Activated CD4-positive, alpha-beta memory T cell treated with anti-CD3 and anti-CD28 coated beads, Interleukin-2, amount 10 ng/mL, durations not matched to agents 7 days and 5 days (primary cell): ENCODE measurements at regions of chr15 and their contacts with region 1.

Region 1: DNA sequence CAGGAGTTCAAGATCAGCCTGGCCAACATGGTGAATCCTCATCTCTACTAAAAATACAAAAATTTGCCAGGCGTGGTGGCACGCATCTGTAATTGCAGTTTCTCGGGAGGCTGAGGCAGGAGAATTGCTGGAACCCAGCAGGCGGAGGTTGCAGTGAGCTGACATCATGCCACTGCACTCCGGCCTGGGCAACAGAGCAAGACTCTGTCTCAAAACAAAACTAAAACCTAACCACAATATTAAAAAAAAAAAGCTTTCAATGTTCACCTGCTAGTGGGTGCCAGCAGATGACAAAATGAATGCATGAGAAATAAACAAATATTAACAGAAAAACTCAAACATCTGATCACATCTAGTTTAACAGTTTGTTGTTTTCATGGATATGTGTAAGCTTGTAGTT is 9.0 kb downstream of the SLC24A1 start:
- DNase-seq: peak; percentile 46
- H3K4me3 Mint-ChIP-seq: no peak overlapping the region
- H3K27ac Mint-ChIP-seq: no peak overlapping the region
- H3K4me1 Mint-ChIP-seq: peaks cover 34% of the 10 kb centered on the region
- H3K27me3 Mint-ChIP-seq: peaks cover 3% of the 10 kb centered on the region

Region 2: GRCh38 chr15:65541231-65541820 is 89.4 kb before region 1 on chr15:
- CTCF ChIA-PET with region 1: no interaction called
- POLR2A ChIA-PET with region 1: no interaction called
- DNase-seq: no peak
- H3K4me3 Mint-ChIP-seq: no peak overlapping the region
- H3K27ac Mint-ChIP-seq: no peak overlapping the region
- H3K4me1 Mint-ChIP-seq: peaks cover 2% of the 10 kb centered on the region
- H3K27me3 Mint-ChIP-seq: no peaks in the 10 kb centered on the region

Region 3: DNA sequence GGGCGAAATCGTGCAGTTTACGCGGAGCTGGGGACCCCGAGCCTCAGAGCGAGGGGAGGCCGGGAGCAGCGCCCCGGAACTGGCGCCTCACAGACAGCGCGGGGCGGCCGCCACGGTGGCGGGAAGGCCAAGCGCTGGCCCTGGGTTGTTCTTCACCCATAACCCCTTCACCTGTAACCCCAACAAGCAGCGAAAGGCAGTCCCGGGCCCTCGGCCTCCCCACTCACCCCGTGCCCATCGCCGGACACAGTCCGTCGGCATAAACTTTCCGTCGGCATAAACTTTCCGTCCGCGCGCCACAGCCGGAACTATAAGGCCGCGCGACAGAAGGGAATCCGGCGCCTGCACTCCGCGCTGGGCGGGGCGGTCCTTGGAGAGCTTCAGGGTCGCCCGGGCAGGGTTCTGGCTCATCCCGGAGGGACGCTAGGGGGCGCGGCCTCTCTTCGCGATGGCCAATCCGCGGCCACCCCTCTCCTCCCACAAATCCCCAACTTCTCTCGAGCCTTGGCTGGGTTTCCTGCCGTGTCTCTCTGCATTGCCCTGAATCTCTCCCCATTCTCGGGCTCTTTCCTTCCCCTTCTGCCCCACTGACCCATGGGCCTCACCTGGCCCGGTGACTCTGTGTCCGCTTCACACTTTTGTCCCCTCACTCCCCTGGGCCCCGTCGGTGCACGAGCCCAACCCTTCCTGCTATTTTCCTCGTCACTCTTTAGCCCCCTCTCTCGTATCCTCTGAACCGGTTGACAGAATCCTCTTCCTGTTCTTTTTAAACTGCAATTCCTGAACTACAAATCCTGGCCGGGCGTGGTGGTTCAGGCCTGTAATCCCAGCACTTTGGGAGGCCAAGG is 19.7 kb before region 1 on chr15 and contains the start of gene INTS14:
- CTCF ChIA-PET with region 1: interaction called, 13 read pairs
- POLR2A ChIA-PET with region 1: interaction called, 24 read pairs
- DNase-seq: peak; percentile 94
- H3K4me3 Mint-ChIP-seq: peak within 1 kb of the TSS; percentile 82
- H3K27ac Mint-ChIP-seq: peak within 1 kb of the TSS; percentile 76
- H3K4me1 Mint-ChIP-seq: peaks cover 40% of the 10 kb centered on the region
- H3K27me3 Mint-ChIP-seq: no peaks in the 10 kb centered on the region
- total RNA-seq, gene INTS14: 35.8 to 41.6 TPM